Calu3 (cell line): ENCODE measurements at regions of chr16 and their contacts with region 1.

Region 1: DNA sequence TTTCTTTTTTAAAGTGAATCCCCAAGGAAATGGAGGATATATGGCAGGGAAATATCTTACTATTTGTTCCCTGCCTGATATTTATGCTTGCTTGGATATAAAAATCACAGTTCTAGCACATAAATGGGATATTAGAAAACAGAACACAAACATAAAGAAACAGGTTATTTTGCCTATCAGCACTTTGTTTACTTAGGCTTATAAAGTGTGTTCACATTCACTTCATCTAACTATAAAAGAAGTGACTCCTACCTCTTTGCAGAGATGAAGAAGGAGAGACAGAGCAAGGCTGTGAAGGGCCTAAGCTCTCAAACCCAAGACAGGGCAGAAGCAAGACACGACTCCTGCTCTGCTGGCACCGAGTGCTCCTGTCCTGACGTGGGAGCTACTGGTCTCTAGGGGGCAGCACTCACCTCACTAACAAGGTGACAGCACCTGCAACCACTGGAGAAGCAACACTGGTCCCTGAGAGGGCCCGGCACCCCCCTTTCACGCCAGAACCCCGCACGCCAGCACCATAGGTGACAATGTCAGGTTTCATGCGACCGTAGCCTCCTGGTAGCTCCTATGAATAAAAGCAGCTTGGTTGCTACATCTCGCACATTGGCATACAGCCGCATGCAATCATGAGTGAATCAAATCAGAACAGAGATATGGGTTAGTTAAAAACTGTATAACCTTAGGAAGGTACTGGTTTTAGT is 32.0 kb downstream of the MBTPS1 start:
- DNase-seq: peak; percentile 80
- H3K4me3 Mint-ChIP-seq: no peak overlapping the region
- H3K27ac Mint-ChIP-seq: no peak overlapping the region
- H3K4me1 Mint-ChIP-seq: no peaks in the 10 kb centered on the region
- H3K27me3 Mint-ChIP-seq: no peaks in the 10 kb centered on the region
- CTCF ChIP-seq: peak; percentile 84

Region 2: DNA sequence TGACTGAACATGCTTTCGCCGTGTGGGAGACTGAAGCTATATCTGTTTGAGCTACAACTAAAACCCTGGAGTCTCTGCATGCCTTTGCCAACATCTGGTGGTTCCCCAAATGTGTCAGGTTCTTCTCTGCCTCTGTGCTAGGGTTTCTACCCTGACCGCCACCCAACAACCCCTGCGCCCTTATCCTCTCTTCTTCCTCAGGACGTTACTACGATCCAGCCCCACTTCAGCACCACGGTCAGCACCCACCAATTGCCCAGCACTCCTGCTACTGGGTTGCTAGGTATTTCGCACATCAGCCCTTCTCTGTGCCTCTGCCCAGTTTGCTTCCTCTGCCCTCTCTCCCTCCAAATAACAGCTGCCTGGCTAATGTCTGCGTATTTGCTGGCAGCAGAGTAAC is 383.2 kb before region 1 on chr16:
- CTCF ChIA-PET with region 1: no interaction called
- intact Hi-C with region 1: no loop called
- DNase-seq: peak; percentile 43
- H3K4me3 Mint-ChIP-seq: no peak overlapping the region
- H3K27ac Mint-ChIP-seq: no peak overlapping the region
- H3K4me1 Mint-ChIP-seq: no peaks in the 10 kb centered on the region
- H3K27me3 Mint-ChIP-seq: peaks cover 42% of the 10 kb centered on the region
- CTCF ChIP-seq: no peak

Region 3: DNA sequence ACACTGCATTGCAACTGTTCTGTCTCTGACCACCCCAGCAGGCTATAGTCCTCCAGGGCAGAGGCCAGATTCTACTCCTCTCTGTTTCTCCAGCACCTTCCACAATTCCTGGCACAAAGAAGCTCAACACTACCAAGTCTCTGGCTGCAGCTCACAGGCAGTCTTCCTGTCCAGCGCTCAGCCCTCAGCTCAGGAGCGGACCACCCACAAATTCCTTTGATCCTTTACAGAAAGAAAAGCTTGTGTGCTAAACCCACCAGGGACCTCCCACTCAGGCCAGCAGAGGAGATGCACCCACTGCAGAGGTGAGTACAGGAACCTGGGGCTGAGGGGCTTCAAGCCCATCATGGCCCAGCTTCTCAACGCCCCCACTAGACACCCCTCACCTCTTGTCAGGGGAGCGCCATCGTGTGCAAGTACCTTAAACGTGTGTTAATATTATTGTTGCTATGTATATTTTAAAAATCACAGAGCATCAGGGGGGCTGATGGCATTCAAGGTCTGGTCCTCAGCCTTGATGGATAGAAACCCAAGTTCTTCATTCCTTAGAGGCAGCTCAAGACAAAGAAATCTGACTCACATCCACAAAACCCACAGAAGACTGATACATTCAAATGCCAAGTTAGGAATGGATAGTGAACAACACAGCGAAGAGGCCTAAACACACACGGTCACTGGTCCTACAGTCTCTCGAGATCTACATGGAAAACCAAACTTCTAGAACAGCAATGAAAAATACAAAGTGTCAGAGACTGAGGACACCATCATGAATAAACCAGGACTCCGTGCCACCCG is 51.8 kb after region 1 on chr16:
- CTCF ChIA-PET with region 1: no interaction called
- intact Hi-C with region 1: no loop called
- DNase-seq: no peak
- H3K4me3 Mint-ChIP-seq: no peak overlapping the region
- H3K27ac Mint-ChIP-seq: no peak overlapping the region
- H3K4me1 Mint-ChIP-seq: peaks cover 9% of the 10 kb centered on the region
- H3K27me3 Mint-ChIP-seq: no peaks in the 10 kb centered on the region
- CTCF ChIP-seq: no peak

Region 4: GRCh38 chr16:84156342-84156784 is 71.6 kb after region 1 on chr16:
- CTCF ChIA-PET with region 1: interaction called, 13 read pairs
- intact Hi-C with region 1: no loop called
- DNase-seq: peak; percentile 39
- H3K4me3 Mint-ChIP-seq: no peak overlapping the region
- H3K27ac Mint-ChIP-seq: peak overlapping the region; percentile 10
- H3K4me1 Mint-ChIP-seq: no peaks in the 10 kb centered on the region
- H3K27me3 Mint-ChIP-seq: peaks cover 33% of the 10 kb centered on the region
- CTCF ChIP-seq: no peak

Region 5: DNA sequence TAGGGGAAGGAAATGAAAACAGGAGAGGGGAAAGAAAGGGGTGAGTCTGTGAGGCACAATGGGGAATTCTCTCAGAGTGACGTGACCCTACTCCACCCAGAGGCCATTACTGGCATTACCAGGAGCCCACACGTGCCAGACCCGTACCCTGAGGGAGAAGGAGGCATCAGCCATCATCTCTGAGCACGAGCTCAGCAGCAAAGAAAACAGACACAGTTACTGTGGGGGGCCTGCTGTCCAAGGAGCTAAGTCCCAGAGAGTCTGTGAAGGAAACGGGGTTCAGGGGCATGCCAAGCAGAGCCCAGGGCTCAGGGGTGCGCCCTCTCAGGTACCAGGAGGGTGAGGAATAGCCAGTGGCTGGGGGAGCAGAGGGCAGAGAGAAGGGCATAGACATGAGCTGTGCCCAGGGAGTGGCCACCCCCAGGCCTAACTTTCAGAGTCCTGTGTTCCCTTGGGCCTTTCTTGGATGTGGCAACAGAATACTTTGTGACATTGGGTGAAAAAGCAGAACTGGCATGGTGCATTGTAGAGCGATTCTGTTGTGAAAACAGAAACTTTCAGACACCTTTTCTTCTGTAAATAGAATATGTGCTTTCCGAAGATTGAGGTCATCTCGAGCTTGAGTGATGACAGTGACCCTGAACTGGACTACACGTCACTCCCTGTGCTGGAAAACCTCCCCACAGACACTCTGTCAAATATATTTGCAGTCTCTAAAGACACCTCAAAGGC is 90.8 kb after region 1 on chr16:
- CTCF ChIA-PET with region 1: interaction called, 9 read pairs
- intact Hi-C with region 1: loop called (anchors 1 kb)
- DNase-seq: peak; percentile 88
- H3K4me3 Mint-ChIP-seq: no peak overlapping the region
- H3K27ac Mint-ChIP-seq: peak overlapping the region; percentile 45
- H3K4me1 Mint-ChIP-seq: peaks cover 9% of the 10 kb centered on the region
- H3K27me3 Mint-ChIP-seq: no peaks in the 10 kb centered on the region
- CTCF ChIP-seq: peak; percentile 93